ENCODE measurements at regions of chr17 and their contacts with region 1.

Region 1: DNA sequence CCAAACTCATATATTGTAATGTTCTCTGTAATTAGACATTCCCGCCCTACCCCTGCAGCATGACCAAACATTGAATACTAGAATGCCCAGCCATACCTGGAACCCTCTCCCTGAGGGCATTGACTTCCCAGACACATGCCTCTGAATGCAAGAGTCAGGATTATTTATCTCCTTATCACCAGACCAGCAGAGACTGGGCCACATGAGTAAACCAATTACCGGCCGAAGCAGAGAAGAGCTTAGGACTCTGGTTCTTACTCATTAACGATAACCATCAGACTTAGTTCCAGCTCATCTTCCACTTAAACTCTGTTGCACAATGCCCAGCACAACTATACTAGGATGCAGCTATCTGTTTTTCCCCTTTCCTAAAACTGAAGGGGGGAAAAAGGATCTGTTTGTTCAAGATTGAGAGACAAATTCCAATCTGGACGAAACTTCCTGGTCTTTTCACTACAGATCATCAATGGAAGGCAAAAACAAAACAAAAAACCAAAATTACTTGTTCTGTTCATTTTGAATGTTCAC is 88.2 kb upstream of the CORO6 start:
- DNase-seq: peak; percentile 77 to 96
- H3K4me3 ChIP-seq: peak overlapping the region; percentile 9; the same call in 1 of the 2 replicates
- H3K27ac ChIP-seq: peak overlapping the region; percentile 81
- H3K4me1 ChIP-seq: peaks cover 40% of the 10 kb centered on the region
- H3K27me3 ChIP-seq: no peaks in the 10 kb centered on the region
- CTCF ChIP-seq: no peak; the same call in 1 of the 2 replicates

Region 2: GRCh38 chr17:29664743-29665480 is 46.0 kb before region 1 on chr17:
- CTCF ChIA-PET with region 1: no interaction called
- POLR2A ChIA-PET with region 1: interaction called, 3 read pairs
- intact Hi-C with region 1: loop called (anchors 2 kb)
- DNase-seq: peak; percentile 15 to 92
- H3K4me3 ChIP-seq: peak overlapping the region; percentile 33; the same call in 1 of the 2 replicates
- H3K27ac ChIP-seq: peak overlapping the region; percentile 98
- H3K4me1 ChIP-seq: peaks cover 51% of the 10 kb centered on the region
- H3K27me3 ChIP-seq: no peaks in the 10 kb centered on the region
- CTCF ChIP-seq: no peak

Region 3: DNA sequence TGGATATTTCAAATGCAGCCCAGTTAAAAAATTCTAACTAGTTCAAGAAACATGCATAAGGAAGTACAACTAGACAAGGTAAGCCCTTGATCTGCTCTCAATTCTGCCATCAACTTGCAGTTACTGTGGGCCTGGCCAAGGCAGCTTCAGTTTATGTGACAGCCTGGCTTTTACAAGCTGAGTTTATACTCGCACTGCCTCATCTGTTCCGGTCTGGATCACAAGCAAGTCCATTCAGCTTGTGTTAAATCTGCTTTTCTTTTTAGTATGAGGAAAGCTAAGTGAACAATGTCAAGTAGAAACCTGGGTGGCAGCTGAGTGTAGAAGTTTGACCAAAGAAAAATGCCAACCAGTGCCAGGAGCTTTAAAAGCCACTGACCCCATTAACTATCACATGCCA is 11.7 kb before region 1 on chr17:
- CTCF ChIA-PET with region 1: no interaction called
- POLR2A ChIA-PET with region 1: no interaction called
- intact Hi-C with region 1: no loop called
- DNase-seq: no peak
- H3K4me3 ChIP-seq: no peak overlapping the region
- H3K27ac ChIP-seq: no peak overlapping the region
- H3K4me1 ChIP-seq: no peaks in the 10 kb centered on the region
- H3K27me3 ChIP-seq: no peaks in the 10 kb centered on the region
- CTCF ChIP-seq: no peak

Region 4: DNA sequence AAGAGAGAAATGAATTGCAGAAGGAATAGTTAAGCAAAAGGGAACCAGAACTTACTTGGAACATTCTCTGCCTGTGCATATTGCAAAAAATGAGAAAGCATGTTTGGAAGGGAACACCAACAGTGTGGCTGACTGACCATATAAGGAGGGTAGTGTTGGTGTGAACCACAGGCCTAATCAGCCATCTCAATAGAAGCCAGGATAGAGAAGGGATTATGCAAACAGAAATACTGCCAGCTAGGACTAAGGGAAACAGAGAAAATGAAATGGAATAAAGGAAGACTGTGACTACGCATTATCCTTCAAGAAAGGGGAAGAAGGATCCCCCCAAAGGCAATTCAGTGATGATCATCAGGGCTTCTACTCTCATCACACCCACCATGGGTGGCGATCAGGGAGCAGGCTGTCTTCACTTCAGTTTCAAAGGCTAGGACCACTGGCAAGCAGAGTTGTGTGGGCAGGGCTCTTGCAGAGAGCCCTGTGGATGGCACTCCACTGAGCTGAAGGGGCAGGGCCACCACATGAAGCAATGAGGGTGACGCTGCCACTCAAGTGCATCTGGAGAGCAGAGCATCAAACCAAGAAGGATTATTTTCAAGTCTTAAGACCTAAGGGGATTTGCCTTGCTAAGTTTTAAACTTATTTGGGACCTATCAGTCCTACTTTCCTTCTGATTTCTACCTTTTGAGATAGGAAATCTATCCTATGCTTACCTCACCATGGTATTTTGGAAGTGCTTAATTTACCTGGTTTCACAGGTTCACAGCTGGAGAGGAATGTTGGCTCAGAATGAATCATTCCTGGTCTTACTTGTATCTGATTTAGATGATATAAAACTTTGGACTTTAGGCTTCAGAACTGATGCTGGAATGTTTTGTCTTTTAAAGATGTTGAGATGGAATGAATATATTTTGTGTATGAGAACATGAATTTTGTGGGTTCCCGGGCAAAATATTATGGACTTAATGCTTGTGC is 78.5 kb after region 1 on chr17:
- CTCF ChIA-PET with region 1: interaction called, 4 read pairs
- POLR2A ChIA-PET with region 1: no interaction called
- intact Hi-C with region 1: loop called (anchors 2 kb)
- DNase-seq: peak in 1 of 2 experiments; percentile 39
- H3K4me3 ChIP-seq: no peak overlapping the region
- H3K27ac ChIP-seq: no peak overlapping the region
- H3K4me1 ChIP-seq: peaks cover 19% of the 10 kb centered on the region
- H3K27me3 ChIP-seq: no peaks in the 10 kb centered on the region
- CTCF ChIP-seq: no peak